ENCODE measurements at regions of chr12 and their contacts with region 1.

Region 1: GRCh38 chr12:58950739-58951100 is 30.4 kb upstream of the LRIG3 start:
- DNase-seq: peak; percentile 59
- H3K4me3 ChIP-seq: no peak overlapping the region
- H3K27ac ChIP-seq: no peak overlapping the region
- H3K4me1 ChIP-seq: no peaks in the 10 kb centered on the region
- H3K27me3 ChIP-seq: no peaks in the 10 kb centered on the region
- CTCF ChIP-seq: peak in 1 of 2 donors; percentile 11
- POLR2A ChIP-seq: no peak

Region 2: DNA sequence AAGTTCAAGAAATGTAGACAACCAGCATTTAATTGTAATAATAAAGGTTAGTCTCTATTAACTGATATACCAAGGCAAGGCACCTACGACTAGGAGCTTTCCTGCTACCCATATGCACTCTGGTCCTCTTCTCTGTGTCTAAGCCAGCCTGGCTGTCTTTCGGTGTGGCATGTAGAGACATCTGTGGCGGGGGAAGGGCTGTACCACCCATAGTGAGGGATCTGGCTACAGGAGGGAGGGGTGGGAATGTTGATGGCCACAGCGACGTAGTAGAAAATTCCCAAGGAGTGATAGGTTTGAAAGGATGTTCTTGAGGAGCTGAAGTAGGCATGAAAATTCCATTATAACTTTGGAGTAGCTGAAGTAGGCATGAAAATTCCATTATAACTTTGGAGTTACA is 665.2 kb before region 1 on chr12:
- CTCF ChIA-PET with region 1: no interaction called
- POLR2A ChIA-PET with region 1: no interaction called
- dilution Hi-C with region 1: no loop called
- intact Hi-C with region 1: no loop called
- DNase-seq: no peak
- H3K4me3 ChIP-seq: no peak overlapping the region
- H3K27ac ChIP-seq: no peak overlapping the region
- H3K4me1 ChIP-seq: no peaks in the 10 kb centered on the region
- H3K27me3 ChIP-seq: no peaks in the 10 kb centered on the region
- CTCF ChIP-seq: no peak
- POLR2A ChIP-seq: no peak

Region 3: GRCh38 chr12:58939399-58940100 is 11.2 kb before region 1 on chr12:
- CTCF ChIA-PET with region 1: interaction called, 6 read pairs
- POLR2A ChIA-PET with region 1: no interaction called
- dilution Hi-C with region 1: no loop called
- intact Hi-C with region 1: loop called (anchors 1 kb)
- DNase-seq: no peak
- H3K4me3 ChIP-seq: no peak overlapping the region
- H3K27ac ChIP-seq: no peak overlapping the region
- H3K4me1 ChIP-seq: peaks cover 36% of the 10 kb centered on the region
- H3K27me3 ChIP-seq: no peaks in the 10 kb centered on the region
- CTCF ChIP-seq: no peak
- POLR2A ChIP-seq: no peak